ENCODE measurements at regions of chr5 and their contacts with region 1.

Region 1: GRCh38 chr5:53262348-53262970 is 152.9 kb upstream of the MOCS2 start:
- DNase-seq: peak; percentile 11 to 17 (median 13)
- ATAC-seq: peak; percentile 64; the same call in 2 of the 3 replicates
- H3K4me3 ChIP-seq: no peak overlapping the region
- H3K27ac ChIP-seq: no peak overlapping the region
- H3K4me1 ChIP-seq: no peaks in the 10 kb centered on the region
- H3K27me3 ChIP-seq: no peaks in the 10 kb centered on the region
- CTCF ChIP-seq: peak; percentile 31 to 56 (median 42); a peak in 4 of 6 replicates
- EP300 ChIP-seq: no peak
- POLR2A ChIP-seq: no peak
- RAD21 ChIP-seq: peak; percentile 47 to 69; a peak in 3 of 4 replicates

Region 2: GRCh38 chr5:53095931-53096525 is 166.4 kb before region 1 on chr5:
- CTCF ChIA-PET with region 1: no interaction called
- POLR2A ChIA-PET with region 1: no interaction called
- in situ Hi-C with region 1: no loop called
- intact Hi-C with region 1: no loop called
- DNase-seq: peak; percentile 54 to 66 (median 58)
- ATAC-seq: peak; percentile 86
- H3K4me3 ChIP-seq: no peak overlapping the region
- H3K27ac ChIP-seq: no peak overlapping the region
- H3K4me1 ChIP-seq: no peaks in the 10 kb centered on the region
- H3K27me3 ChIP-seq: no peaks in the 10 kb centered on the region
- CTCF ChIP-seq: peak; percentile 54 to 73 (median 71)
- EP300 ChIP-seq: no peak
- POLR2A ChIP-seq: no peak
- RAD21 ChIP-seq: peak; percentile 70 to 74

Region 3: DNA sequence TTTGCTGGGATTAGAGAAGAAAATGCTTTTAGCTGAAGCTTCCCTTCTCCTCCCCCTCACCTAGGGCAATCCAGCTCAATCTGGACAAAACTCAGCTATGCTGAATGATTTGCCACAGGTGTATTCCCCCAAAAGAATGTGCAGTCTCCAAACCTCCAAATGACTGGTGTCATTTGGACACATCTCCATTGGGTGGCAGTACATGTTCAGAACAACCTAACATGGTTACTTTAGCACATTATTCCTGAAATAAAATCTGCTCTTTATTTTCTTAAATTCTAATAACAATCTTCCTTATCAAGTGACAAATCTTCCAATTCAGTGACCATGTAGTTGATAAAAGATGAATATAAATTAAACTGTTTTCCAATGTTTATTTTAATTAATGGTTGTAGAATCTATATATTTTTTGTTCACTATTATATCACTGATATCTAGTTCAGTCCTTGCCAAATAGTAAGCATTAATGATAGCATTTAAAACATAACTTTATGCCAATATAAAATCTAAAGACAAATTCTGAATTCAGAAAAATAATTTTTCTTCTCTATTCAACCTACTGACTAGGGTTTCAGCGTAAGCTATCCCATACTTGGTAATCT is 91.6 kb before region 1 on chr5:
- CTCF ChIA-PET with region 1: no interaction called
- POLR2A ChIA-PET with region 1: no interaction called
- in situ Hi-C with region 1: no loop called
- intact Hi-C with region 1: no loop called
- DNase-seq: peak in 3 of 4 experiments; percentile 11 to 46 (median 24)
- ATAC-seq: peak; percentile 84
- H3K4me3 ChIP-seq: no peak overlapping the region
- H3K27ac ChIP-seq: no peak overlapping the region
- H3K4me1 ChIP-seq: no peaks in the 10 kb centered on the region
- H3K27me3 ChIP-seq: no peaks in the 10 kb centered on the region
- CTCF ChIP-seq: peak; percentile 55 to 68 (median 59); a peak in 5 of 6 replicates
- EP300 ChIP-seq: no peak
- POLR2A ChIP-seq: no peak
- RAD21 ChIP-seq: peak; percentile 70 to 75

Region 4: DNA sequence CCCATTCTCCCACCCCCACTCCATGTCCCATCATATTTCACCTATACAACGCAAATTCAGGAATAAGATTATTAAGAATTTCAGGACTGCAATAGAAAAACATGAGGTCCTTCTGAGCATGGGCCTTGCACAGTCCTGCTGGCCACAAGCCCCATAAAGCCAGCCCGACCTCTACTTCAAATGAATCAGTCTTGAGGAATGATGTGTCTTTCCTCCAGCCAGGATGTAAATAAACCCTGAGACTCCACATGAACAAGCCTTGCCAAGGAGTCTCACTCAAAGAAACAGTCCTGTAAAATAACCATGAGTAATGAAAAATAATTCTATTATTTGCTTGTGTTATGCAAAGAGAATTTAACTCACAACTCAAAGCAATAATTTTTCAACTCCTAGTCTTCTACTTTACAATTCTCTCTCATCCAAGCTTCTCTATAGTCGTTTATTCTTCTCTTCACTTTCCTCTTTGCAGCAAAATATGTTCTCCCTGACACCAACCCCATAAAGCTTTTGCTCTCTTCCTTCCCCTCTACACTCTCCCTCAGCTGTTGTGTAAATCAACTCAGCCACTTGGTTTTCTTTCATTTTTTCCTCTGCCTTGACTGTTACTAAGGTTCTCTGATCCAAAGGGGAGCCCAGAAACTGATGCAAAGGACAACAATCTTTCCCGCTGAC is 12.8 kb before region 1 on chr5:
- CTCF ChIA-PET with region 1: no interaction called
- POLR2A ChIA-PET with region 1: no interaction called
- in situ Hi-C with region 1: no loop called
- intact Hi-C with region 1: no loop called
- DNase-seq: no peak
- ATAC-seq: no peak
- H3K4me3 ChIP-seq: no peak overlapping the region
- H3K27ac ChIP-seq: no peak overlapping the region
- H3K4me1 ChIP-seq: peaks cover 0 to 6% of the 10 kb centered on the region in 2 experiments; a peak in 2 of 5 replicates
- H3K27me3 ChIP-seq: peaks cover 0 to 6% of the 10 kb centered on the region in 2 experiments; a peak in 1 of 5 replicates
- CTCF ChIP-seq: no peak
- EP300 ChIP-seq: no peak
- POLR2A ChIP-seq: no peak
- RAD21 ChIP-seq: no peak

Region 5: GRCh38 chr5:53343187-53343586 is 80.7 kb after region 1 on chr5:
- CTCF ChIA-PET with region 1: no interaction called
- POLR2A ChIA-PET with region 1: no interaction called
- in situ Hi-C with region 1: loop called (anchors 5 kb)
- intact Hi-C with region 1: no loop called
- DNase-seq: no peak
- ATAC-seq: no peak
- H3K4me3 ChIP-seq: no peak overlapping the region
- H3K27ac ChIP-seq: no peak overlapping the region
- H3K4me1 ChIP-seq: no peaks in the 10 kb centered on the region
- H3K27me3 ChIP-seq: no peaks in the 10 kb centered on the region
- CTCF ChIP-seq: no peak
- EP300 ChIP-seq: no peak
- POLR2A ChIP-seq: no peak
- RAD21 ChIP-seq: no peak

Region 6: GRCh38 chr5:54229041-54229780 is 966.8 kb after region 1 on chr5:
- CTCF ChIA-PET with region 1: no interaction called
- POLR2A ChIA-PET with region 1: no interaction called
- in situ Hi-C with region 1: no loop called
- intact Hi-C with region 1: loop called (anchors 10 kb)
- DNase-seq: peak; percentile 46 to 65 (median 52)
- ATAC-seq: peak; percentile 79
- H3K4me3 ChIP-seq: no peak overlapping the region
- H3K27ac ChIP-seq: no peak overlapping the region
- H3K4me1 ChIP-seq: peaks cover 5 to 28% of the 10 kb centered on the region in 2 experiments; a peak in 4 of 5 replicates
- H3K27me3 ChIP-seq: no peaks in the 10 kb centered on the region
- CTCF ChIP-seq: peak; percentile 62 to 71 (median 71)
- EP300 ChIP-seq: no peak
- POLR2A ChIP-seq: no peak
- RAD21 ChIP-seq: peak; percentile 46 to 49